ENCODE measurements at regions of chr14 and their contacts with region 1.

Region 1: GRCh38 chr14:53539489-53540126 is 386.5 kb upstream of the DDHD1 start:
- DNase-seq: peak; percentile 67 to 78 (median 72)
- ATAC-seq: peak; percentile 67 to 92 (median 81)
- H3K4me3 ChIP-seq: no peak overlapping the region
- H3K27ac ChIP-seq: peak overlapping the region in 5 of 12 donors; percentile 15 to 56 (median 34)
- H3K4me1 ChIP-seq: peaks cover 0 to 42% (median 7%) of the 10 kb centered on the region in 12 donors
- H3K27me3 ChIP-seq: no peaks in the 10 kb centered on the region
- CTCF ChIP-seq: peak; percentile 75 to 95 (median 89)
- POLR2A ChIP-seq: no peak

Region 2: GRCh38 chr14:53295985-53296582 is 243.5 kb before region 1 on chr14:
- intact Hi-C with region 1: loop called in 1 of 10 experiments (anchors 5 kb)
- DNase-seq: no peak
- ATAC-seq: no peak
- H3K4me3 ChIP-seq: no peak overlapping the region
- H3K27ac ChIP-seq: no peak overlapping the region
- H3K4me1 ChIP-seq: no peaks in the 10 kb centered on the region
- H3K27me3 ChIP-seq: no peaks in the 10 kb centered on the region
- CTCF ChIP-seq: peak; percentile 52 to 87 (median 74)
- POLR2A ChIP-seq: no peak

Region 3: GRCh38 chr14:53509276-53510244 is 30.0 kb before region 1 on chr14:
- intact Hi-C with region 1: no loop called
- DNase-seq: peak in 4 of 5 donors; percentile 29 to 72 (median 46)
- ATAC-seq: peak; percentile 88 to 97 (median 95)
- H3K4me3 ChIP-seq: no peak overlapping the region
- H3K27ac ChIP-seq: peak overlapping the region; percentile 1 to 71 (median 38)
- H3K4me1 ChIP-seq: no peaks in the 10 kb centered on the region
- H3K27me3 ChIP-seq: no peaks in the 10 kb centered on the region
- CTCF ChIP-seq: no peak
- POLR2A ChIP-seq: peak in 1 of 2 donors; percentile 20

Region 4: DNA sequence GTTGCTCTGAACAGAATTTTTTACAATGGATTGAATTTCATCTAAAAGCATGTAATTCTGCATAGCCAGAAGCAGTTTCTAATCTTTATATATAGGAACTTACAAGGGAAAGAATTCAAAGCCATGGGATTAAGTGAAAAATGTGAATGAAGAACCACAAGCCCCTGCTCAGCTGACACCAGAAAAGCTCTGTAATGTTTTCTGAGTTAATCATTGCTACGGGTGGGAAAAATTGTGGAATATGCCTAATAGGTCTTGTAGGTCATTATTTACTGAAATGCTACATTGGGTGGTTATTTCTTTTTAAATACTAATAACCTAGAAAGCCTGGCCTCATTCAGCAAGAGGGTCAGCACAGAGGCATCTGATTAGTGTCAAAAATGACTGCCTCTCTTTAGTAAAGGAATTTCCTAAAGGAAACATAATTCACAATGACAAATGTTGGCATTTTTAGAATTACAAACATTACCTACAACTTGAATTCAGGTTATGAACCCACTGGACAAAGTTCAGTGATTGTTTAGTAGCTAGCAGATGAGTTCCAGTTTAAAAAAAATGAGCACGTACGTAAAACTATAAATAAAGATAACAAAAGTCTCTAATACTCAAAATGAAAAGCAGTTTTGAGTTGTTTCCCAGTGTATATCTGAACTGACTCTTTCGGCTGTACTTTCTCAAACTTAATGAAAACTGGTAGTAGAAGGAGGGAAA is 341.7 kb after region 1 on chr14:
- intact Hi-C with region 1: loop called in 1 of 10 experiments (anchors 10 kb)
- DNase-seq: no peak
- ATAC-seq: no peak
- H3K4me3 ChIP-seq: no peak overlapping the region
- H3K27ac ChIP-seq: peak overlapping the region in 4 of 12 donors; percentile 4 to 40 (median 26)
- H3K4me1 ChIP-seq: peaks cover 0 to 38% (median 6%) of the 10 kb centered on the region in 12 donors
- H3K27me3 ChIP-seq: no peaks in the 10 kb centered on the region
- CTCF ChIP-seq: no peak
- POLR2A ChIP-seq: no peak

Region 5: DNA sequence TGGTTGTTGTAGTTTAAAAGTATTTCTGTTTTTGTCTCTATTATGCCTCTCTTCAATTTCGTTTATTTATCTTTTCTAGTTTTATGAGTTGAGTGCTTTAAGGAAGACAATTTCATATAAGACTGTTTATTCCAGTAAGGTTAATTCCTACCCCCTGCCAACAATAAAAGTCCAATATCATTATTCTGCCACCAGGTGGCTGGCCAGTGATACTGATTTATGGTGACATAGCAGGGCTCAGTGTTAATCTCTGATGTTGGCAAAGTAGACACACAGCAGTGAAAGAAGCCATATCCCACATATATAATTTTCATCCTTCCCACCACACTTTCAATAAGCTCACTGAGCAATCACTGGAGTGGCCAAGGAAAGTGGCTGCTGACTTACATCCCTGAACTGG is 486.1 kb after region 1 on chr14:
- intact Hi-C with region 1: loop called in 2 of 10 experiments (anchors 10 kb)
- DNase-seq: no peak
- ATAC-seq: no peak
- H3K4me3 ChIP-seq: no peak overlapping the region
- H3K27ac ChIP-seq: no peak overlapping the region
- H3K4me1 ChIP-seq: no peaks in the 10 kb centered on the region
- H3K27me3 ChIP-seq: no peaks in the 10 kb centered on the region
- CTCF ChIP-seq: peak in 8 of 12 donors; percentile 24 to 48 (median 43)
- POLR2A ChIP-seq: no peak

Region 6: DNA sequence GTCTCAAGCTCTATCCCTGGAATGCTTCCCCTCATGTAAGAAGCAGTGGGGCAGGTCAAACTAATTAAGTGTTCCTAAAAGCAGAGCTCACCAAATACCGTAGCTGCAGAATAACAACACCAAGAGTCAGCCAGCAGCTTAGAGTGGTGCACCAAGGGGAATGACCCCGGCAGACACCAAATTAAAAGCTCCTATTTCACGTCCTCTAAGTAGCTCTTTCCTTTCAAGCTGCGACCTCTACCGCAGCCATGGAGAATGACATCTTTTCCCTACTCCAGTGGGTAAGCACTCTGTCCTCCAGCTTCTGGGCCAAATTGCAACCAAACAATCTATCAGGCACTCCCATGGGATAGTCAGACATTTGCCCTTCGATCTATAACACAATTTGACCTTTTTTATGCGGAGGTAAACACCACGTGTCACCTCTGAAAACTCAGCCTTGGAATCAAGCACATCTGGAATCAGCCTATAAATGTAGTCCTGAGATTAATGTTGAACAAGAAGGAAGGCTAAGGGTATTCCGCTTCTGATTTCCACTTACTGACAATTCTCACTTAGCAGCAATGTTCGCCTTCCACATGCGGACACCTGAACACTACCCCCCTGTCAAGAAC is 789.6 kb after region 1 on chr14:
- intact Hi-C with region 1: loop called in 5 of 10 experiments (anchors 5 kb)
- DNase-seq: peak in 4 of 5 donors; percentile 30 to 49 (median 40)
- ATAC-seq: peak; percentile 62 to 84 (median 82)
- H3K4me3 ChIP-seq: no peak overlapping the region
- H3K27ac ChIP-seq: no peak overlapping the region
- H3K4me1 ChIP-seq: peaks cover 0 to 13% (median 0%) of the 10 kb centered on the region in 12 donors
- H3K27me3 ChIP-seq: no peaks in the 10 kb centered on the region
- CTCF ChIP-seq: peak; percentile 41 to 79 (median 59)
- POLR2A ChIP-seq: no peak